Mucosa of descending colon (tissue), 3 donors: ENCODE measurements at regions of chr6 and their contacts with region 1.

Region 1: DNA sequence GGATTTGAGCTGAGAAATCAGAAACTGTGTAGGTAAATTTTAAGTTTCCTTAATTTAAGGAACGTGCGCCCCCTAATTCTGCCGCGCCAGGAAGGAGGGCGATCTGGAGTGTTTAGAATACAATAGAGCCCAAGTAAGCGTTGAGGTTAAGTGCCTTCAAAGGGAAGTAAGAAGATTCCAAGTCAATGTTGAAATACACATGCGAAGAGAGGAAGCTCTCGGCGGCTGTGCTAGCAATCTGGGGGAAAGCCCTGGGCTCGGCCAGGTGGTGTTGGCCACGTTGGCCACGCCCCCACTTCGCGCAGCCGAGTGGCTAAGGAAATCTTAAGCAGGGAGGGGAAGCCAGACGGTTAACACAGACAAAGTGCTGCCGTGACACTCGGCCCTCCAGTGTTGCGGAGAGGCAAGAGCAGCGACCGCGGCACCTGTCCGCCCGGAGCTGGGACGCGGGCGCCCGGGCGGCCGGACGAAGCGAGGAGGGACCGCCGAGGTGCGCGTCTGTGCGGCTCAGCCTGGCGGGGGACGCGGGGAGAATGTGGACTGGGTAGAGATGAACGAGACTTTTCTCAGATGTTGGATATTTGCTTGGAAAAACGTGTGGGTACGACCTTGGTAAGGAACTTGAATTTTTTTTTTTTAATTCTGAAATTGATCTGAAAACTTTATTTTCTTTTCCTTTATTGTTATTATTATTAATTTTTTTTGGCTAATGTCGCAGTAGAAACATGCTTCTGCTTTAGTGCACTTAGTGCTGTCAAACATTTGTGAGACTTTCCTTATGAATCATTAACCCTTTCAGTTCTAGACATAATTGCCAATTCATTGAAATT is at the start of gene PRDM1:
- DNase-seq: peak; percentile 93 to 96 (median 94)
- ATAC-seq: peak; percentile 96
- H3K4me3 ChIP-seq: peak within 1 kb of the TSS; percentile 6
- H3K4me1 ChIP-seq: no peaks in the 10 kb centered on the region
- CTCF ChIP-seq: no peak
- total RNA-seq, gene PRDM1: 10.5 to 30.7 (median 23.4) TPM

Region 2: DNA sequence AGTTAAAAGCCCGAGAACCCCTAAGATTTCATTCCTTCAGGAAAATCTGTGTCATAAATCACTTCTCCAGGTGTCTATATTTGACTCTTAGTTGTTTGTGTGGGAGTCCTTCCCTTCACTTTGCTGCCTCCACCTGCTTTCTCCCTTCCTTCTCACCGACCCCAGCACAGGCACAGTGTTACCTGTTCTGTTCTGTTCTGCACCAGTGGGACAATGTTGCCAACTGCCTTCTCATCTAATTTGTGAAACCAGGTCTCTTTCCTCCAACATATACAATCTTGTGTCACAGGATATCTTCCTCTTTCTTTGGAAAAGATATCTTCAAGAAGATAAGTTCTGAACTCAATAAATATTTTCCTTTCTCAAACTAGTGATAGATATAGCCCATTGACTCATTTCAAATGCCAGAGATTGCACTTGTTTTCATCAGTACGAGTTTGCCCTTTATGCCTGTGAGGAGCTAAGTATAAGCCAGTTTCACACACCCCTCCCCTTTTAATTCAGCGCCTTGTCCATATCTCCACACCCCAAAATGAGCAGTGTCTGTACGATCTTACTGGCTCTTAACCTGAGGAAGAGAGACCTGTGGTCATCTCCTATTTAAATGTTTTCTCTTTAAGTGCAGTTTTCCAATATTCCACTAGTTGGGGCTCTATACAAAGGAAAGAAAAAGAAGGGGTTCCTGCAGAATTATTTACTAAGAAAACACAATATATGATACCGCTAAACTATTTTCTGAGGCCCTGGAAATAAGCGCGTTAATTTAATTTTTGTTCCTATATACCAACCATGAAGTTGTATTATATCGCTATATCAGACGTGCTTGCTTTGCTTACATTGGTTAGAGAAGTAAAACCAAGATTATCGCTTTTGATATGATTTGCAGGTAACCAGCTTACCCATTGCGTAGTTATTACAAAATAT is 601.7 kb before region 1 on chr6:
- intact Hi-C with region 1: loop called in 1 of 2 experiments (anchors 5 kb)
- DNase-seq: peak in 1 of 3 donors; percentile 9
- ATAC-seq: peak; percentile 74
- H3K4me3 ChIP-seq: no peak overlapping the region
- H3K4me1 ChIP-seq: no peaks in the 10 kb centered on the region
- CTCF ChIP-seq: peak; percentile 56

Region 3: DNA sequence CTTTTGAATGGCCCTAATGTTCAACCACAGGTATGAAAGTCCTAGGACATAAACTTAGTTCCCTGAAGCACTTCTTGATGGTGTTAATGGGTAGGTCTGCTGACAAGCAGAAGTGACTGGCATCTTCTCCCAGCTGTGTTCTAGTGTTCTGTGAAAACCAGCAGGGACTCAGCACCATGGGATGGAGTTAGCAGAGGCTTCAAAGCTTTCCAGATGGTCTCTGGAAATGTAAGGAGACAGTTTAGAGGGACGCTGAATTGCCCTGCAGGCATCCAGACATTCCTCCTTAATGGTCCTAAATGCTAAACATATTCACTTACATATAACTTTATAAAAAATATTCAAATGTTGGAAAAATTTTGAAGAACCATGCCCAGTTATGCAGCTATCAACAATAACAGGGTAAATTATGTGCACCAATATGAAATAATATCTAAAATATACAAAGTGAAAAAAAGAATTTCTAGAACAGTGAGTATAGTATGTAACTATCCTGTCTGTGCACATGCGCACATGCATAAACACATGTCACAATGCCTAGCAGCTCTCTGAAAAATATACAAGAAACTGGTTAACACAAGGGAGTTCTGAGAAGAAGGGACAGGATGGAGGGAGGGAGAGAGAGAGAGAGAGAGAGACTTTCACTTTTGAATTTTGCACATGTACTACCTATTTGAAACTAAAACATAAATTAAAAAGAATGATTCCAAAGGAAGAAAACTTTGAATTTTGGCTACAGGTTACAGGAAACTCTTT is 87.1 kb after region 1 on chr6:
- intact Hi-C with region 1: loop called in 1 of 2 experiments (anchors 10 kb)
- DNase-seq: no peak
- ATAC-seq: no peak
- H3K4me3 ChIP-seq: no peak overlapping the region
- H3K4me1 ChIP-seq: peaks cover 7% of the 10 kb centered on the region
- CTCF ChIP-seq: no peak